MCF 10A (cell line): ENCODE measurements at regions of chr12 and their contacts with region 1.

Region 1: GRCh38 chr12:121279507-121279915 is 17.0 kb downstream of the CAMKK2 start:
- DNase-seq: no peak
- H3K4me3 Mint-ChIP-seq: no peak overlapping the region
- H3K27ac Mint-ChIP-seq: no peak overlapping the region
- H3K4me1 Mint-ChIP-seq: peaks cover 4% of the 10 kb centered on the region
- H3K27me3 Mint-ChIP-seq: no peaks in the 10 kb centered on the region
- CTCF ChIP-seq: no peak

Region 2: GRCh38 chr12:120874547-120875245 is 404.8 kb before region 1 on chr12:
- CTCF ChIA-PET with region 1: no interaction called
- POLR2A ChIA-PET with region 1: no interaction called
- intact Hi-C with region 1: no loop called
- DNase-seq: no peak
- H3K4me3 Mint-ChIP-seq: no peak overlapping the region
- H3K27ac Mint-ChIP-seq: no peak overlapping the region
- H3K4me1 Mint-ChIP-seq: peaks cover 18% of the 10 kb centered on the region
- H3K27me3 Mint-ChIP-seq: no peaks in the 10 kb centered on the region
- CTCF ChIP-seq: no peak

Region 3: DNA sequence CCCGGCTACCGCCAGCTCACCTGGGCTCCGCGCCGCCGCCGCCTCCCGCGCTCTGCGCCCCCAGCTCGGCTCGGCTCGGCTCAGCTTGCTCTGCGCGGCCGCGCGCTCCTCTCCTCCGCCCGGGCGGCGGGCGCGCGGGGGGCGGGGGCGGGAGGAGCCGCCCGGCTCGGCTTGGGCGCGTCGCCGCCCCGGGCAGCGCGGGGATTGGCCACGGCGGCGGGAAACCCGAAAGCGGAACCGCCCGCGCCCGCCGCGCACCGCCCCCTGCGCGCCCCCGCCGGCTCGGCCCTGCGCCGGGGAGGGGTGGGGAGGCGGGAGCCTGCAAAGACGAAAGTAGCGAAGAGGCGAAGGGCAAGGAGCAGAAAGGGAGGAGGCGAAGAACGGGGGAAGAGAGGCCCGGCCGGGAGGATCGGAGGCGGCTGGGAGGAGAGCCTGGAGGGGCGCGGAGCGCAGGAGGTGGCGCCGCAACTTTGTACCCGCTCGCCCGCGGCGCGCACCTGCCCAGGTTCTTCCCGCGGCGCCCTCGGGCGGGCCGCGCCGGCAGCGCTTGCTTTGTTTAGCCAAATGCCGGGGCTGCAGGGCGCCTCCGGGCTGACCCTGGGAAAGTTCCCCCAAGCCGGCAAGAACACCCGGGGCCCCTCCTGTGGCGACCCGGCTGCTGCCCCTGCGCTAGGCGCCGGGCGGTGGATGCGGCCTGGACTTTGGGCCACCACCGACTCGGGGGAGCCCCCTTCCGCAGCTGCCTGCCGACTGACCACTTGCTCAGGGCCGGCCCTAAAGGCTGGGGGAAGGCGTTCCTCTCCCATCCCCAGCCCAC is 17.3 kb after region 1 on chr12 and contains the start of gene CAMKK2:
- CTCF ChIA-PET with region 1: interaction called, 3 read pairs
- POLR2A ChIA-PET with region 1: interaction called, 20 read pairs
- intact Hi-C with region 1: loop called (anchors 2 kb)
- DNase-seq: peak; percentile 82
- H3K4me3 Mint-ChIP-seq: peak within 1 kb of the TSS; percentile 78
- H3K27ac Mint-ChIP-seq: peak within 1 kb of the TSS; percentile 49
- H3K4me1 Mint-ChIP-seq: peaks cover 11% of the 10 kb centered on the region
- H3K27me3 Mint-ChIP-seq: no peaks in the 10 kb centered on the region
- CTCF ChIP-seq: peak; percentile 26
- total RNA-seq, gene CAMKK2: 31.9 and 36.3 TPM in 2 replicates